ENCODE measurements at regions of chr12 and their contacts with region 1.

Region 1: DNA sequence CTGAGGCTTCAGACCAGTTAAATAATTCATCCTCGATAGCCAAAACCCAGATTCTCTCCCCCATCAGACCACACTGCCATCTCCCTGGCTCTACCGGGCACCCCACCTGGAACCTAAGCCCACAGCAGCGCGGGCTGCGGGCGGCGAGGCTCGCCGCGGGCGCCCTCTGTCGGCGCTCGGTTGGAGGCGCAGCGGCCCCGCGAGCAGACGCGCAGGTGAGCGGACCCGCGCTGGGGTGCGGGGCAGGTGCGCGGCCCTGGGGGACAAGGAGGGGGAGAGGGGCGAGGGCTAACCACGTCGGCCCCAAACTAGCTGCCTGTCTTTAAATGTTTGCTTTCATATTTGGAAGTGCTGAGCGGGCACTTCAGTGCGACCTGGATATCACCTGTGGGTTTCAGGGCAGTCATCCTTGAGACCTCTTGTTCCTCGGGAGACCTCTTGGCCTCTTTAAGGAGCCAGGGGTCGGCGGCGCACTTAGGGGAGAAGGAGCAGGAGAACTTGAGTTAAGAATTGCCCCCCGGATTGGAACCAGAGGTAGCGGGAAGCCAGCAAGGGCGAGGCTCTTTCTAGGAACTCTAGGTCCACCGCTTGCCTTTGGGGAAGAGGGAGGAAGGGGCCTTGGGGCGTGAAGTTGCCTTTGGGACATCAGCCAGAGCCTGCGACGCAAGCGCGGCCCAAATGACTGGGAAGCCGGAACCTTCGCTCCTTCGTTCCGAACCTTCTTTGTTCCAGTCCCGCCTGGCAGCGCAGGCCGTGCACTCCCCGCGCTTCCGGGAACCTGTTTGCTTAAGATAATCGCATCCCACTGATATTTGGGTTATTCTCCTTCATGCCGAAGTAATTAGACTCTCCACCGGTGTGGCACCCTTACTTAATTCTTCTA is 78.7 kb downstream of the NEDD1 start:
- DNase-seq: peak; percentile 67
- ATAC-seq: peak; percentile 93
- H3K4me3 ChIP-seq: peak overlapping the region; percentile 47
- H3K27ac ChIP-seq: no peak overlapping the region
- H3K4me1 ChIP-seq: peaks cover 7% of the 10 kb centered on the region
- H3K27me3 ChIP-seq: peaks cover 15% of the 10 kb centered on the region
- CTCF ChIP-seq: peak; percentile 79

Region 2: GRCh38 chr12:96578526-96579125 is 407.1 kb before region 1 on chr12:
- intact Hi-C with region 1: loop called (anchors 10 kb)
- DNase-seq: no peak
- ATAC-seq: peak; percentile 59
- H3K4me3 ChIP-seq: no peak overlapping the region
- H3K27ac ChIP-seq: no peak overlapping the region
- H3K4me1 ChIP-seq: no peaks in the 10 kb centered on the region
- H3K27me3 ChIP-seq: no peaks in the 10 kb centered on the region
- CTCF ChIP-seq: peak; percentile 64

Region 3: DNA sequence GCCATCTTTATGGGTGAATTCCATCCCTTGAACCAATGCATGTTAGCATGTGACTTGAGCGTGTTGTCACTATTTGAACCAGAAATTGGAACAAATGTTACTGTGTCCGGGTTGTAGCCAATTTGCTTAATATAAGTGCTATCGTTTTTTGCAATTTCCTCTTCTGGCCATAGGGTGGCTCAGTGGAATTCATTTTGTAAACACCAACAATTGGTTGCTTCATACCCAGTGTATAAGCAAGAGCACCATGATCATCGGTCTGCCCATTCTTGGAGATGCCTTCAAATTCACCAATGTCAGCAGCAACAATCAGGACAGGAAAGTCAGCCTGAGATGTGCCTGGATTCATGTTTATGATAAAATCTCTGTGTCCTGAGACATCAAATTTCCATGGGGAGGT is 83.6 kb before region 1 on chr12:
- intact Hi-C with region 1: no loop called
- DNase-seq: no peak
- ATAC-seq: no peak
- H3K4me3 ChIP-seq: no peak overlapping the region
- H3K27ac ChIP-seq: no peak overlapping the region
- H3K4me1 ChIP-seq: no peaks in the 10 kb centered on the region
- H3K27me3 ChIP-seq: no peaks in the 10 kb centered on the region
- CTCF ChIP-seq: no peak

Region 4: GRCh38 chr12:97093187-97093683 is 107.5 kb after region 1 on chr12:
- intact Hi-C with region 1: no loop called
- DNase-seq: no peak
- ATAC-seq: no peak
- H3K4me3 ChIP-seq: no peak overlapping the region
- H3K27ac ChIP-seq: no peak overlapping the region
- H3K4me1 ChIP-seq: no peaks in the 10 kb centered on the region
- H3K27me3 ChIP-seq: no peaks in the 10 kb centered on the region
- CTCF ChIP-seq: no peak